ENCODE measurements at regions of chr15 and their contacts with region 1.

Region 1: GRCh38 chr15:60478566-60479360 is at the start of gene ICE2:
- DNase-seq: peak; percentile 96 to 98
- ATAC-seq: peak; percentile 87 to 96 (median 87)
- H3K4me3 ChIP-seq: peak within 1 kb of the TSS; percentile 65
- H3K4me3 Mint-ChIP-seq: peak within 1 kb of the TSS; percentile 98
- H3K27ac ChIP-seq: peak within 1 kb of the TSS; percentile 83
- H3K27ac Mint-ChIP-seq: peak within 1 kb of the TSS; percentile 99
- H3K4me1 ChIP-seq: peaks cover 11% of the 10 kb centered on the region
- H3K4me1 Mint-ChIP-seq: peaks cover 35 to 45% of the 10 kb centered on the region in 2 donors
- H3K27me3 ChIP-seq: no peaks in the 10 kb centered on the region
- H3K27me3 Mint-ChIP-seq: no peaks in the 10 kb centered on the region
- CTCF ChIP-seq: no peak
- total RNA-seq, gene ICE2: 21.7 to 36.7 (median 32.9) TPM

Region 2: DNA sequence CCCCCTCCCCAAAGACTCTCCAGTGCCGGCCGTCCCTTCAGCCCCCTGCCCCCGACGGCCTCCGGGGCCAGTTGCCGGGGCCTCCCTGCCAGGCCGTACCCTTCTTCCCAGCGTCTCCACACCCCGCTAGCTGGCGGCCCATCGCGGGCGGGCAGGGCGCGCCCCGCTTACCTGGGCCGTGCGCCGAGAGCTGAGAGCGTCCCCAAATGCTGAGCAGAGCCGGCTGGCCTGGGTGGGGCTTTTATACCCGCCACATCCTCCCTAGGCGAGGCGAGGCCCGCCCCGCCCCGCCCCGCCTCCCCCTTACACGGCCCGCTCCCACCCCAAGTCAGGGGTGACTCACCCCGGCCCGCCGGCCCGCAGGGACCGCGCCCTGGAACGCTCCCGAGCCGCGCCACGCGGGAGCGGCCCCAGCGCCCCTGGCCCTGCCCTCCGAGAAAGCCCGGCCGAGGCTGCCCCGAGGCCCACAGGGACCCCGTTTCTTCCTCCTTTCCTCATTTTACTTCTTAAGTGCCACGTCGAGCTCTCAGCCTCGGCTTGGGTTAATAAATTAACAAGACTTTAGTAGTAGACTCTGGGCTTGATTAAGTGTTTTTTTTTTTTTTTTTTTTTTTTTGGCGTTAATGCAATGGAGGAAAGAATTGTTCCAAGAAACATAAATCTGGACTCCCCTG is 80.9 kb before region 1 on chr15 and contains the start of gene ANXA2:
- intact Hi-C with region 1: loop called (anchors 2 kb)
- DNase-seq: peak; percentile 72 to 89
- ATAC-seq: peak; percentile 70 to 83 (median 78)
- H3K4me3 ChIP-seq: peak within 1 kb of the TSS; percentile 65
- H3K4me3 Mint-ChIP-seq: peak within 1 kb of the TSS; percentile 89
- H3K27ac ChIP-seq: peak within 1 kb of the TSS; percentile 71
- H3K27ac Mint-ChIP-seq: peak within 1 kb of the TSS; percentile 92 to 93
- H3K4me1 ChIP-seq: peaks cover 30% of the 10 kb centered on the region
- H3K4me1 Mint-ChIP-seq: peaks cover 47 to 57% of the 10 kb centered on the region in 2 donors
- H3K27me3 ChIP-seq: no peaks in the 10 kb centered on the region
- H3K27me3 Mint-ChIP-seq: no peaks in the 10 kb centered on the region
- CTCF ChIP-seq: no peak
- total RNA-seq, gene ANXA2: 132 to 230 (median 155) TPM

Region 3: DNA sequence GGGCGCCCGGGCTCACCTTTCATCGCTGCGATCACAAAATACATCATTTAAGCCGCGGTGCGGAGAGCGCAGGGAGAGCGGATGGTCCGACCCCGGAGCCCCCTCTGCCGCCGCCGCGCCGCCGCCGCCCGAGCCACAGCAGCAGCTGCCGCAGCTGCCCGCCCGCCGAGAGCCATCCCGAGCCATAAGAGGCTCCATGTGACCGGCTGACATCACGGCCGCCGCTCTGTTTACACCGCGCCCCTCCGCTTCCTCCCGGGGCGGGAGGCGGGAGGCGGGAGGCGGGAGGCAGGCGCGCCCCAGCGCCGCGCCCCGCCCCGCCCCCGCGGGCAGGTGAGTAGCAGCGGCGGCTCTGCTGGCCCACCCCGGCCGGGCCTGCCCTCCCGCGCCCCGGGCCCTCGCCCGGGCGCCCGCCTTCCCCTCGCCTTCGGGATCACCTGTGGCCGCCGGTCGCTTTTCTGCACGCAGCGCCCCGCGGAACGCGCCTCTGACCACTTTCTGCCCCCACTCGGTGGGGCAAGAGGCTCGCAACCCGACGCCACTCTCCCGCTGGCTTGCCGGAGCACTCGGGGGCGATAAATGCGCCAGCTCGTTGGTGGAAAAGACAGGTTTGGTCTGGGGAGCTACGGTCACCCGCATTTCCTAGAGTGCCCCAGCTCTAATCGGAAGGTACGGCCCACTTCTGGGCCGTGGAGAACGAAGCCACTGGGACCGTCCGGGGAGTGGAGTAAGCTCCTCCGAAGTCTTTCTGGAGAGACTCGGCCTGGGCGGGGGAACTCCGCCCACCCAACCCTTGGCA is 113.8 kb after region 1 on chr15:
- intact Hi-C with region 1: loop called (anchors 1 kb)
- DNase-seq: peak; percentile 73 to 92
- ATAC-seq: peak; percentile 81 to 93 (median 87)
- H3K4me3 ChIP-seq: peak overlapping the region; percentile 90
- H3K4me3 Mint-ChIP-seq: peak overlapping the region; percentile 91
- H3K27ac ChIP-seq: peak overlapping the region; percentile 86
- H3K27ac Mint-ChIP-seq: peak overlapping the region; percentile 93
- H3K4me1 ChIP-seq: peaks cover 13% of the 10 kb centered on the region
- H3K4me1 Mint-ChIP-seq: peaks cover 39 to 52% of the 10 kb centered on the region in 2 donors
- H3K27me3 ChIP-seq: no peaks in the 10 kb centered on the region
- H3K27me3 Mint-ChIP-seq: no peaks in the 10 kb centered on the region
- CTCF ChIP-seq: no peak